GM12878 (cell line): ENCODE measurements at regions of chr18 and their contacts with region 1.

Region 1: DNA sequence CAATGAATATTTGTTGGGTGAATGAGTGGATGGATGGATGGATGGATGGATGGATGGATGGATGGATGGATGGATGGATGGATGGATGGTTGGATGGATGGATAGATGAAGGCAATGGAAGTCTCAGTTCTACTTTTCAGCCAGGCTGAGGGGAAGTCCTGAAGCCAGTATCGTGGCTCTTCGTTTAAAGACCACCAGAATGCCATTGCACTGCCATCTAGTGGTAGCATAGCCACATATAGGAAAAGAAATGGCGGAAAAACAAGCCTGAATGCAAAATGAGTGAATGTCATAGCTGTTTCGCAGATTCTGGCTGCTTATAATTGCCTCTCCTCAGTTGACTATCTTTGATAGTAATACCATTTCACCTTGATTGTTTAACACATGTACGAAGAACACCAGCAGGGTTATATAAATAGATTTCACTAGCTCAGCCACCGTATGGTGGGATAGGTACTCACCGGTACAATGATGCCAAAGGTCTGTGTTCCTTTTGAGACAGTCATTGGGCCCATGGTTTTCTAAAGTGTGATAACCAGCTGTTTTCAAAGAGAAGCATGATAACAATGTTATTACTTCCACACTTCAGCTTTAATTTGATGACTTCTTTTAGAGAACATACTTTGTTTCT is 62.3 kb upstream of the GREB1L start:
- DNase-seq: peak; percentile 32
- ATAC-seq: peak; percentile 94
- H3K4me3 ChIP-seq: no peak overlapping the region
- H3K27ac ChIP-seq: no peak overlapping the region
- H3K4me1 ChIP-seq: no peaks in the 10 kb centered on the region
- H3K27me3 ChIP-seq: no peaks in the 10 kb centered on the region
- CTCF ChIP-seq: peak; percentile 78 to 85 (median 78)
- EP300 ChIP-seq: no peak
- POLR2A ChIP-seq: no peak
- RAD21 ChIP-seq: peak; percentile 83

Region 2: DNA sequence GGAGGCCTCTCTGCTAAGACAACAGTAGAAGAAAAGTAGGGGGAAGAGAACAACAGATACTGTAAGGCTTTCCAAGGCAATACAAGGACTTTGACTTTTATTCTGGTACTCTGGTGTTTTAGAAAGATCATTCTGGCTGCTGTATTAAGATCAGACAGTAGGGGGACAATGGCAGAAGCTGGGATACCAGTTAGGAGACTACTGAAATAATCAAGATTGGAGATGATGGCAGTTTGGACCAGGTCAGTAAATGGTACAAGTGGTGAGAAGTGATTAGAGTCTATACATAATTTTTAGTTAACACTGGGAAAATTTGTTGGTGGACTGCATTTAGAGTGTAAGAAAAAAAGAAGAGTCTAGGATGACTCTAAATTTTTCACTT is 207.8 kb before region 1 on chr18:
- CTCF ChIA-PET with region 1: interaction called, 8 read pairs
- POLR2A ChIA-PET with region 1: no interaction called
- RAD21 ChIA-PET with region 1: interaction called, 3 read pairs
- SMC1A ChIA-PET with region 1: interaction called, 5 read pairs
- in situ Hi-C with region 1: loop called (anchors 5 kb)
- intact Hi-C with region 1: loop called (anchors 2 kb)
- DNase-seq: no peak
- ATAC-seq: peak; percentile 85
- H3K4me3 ChIP-seq: no peak overlapping the region
- H3K27ac ChIP-seq: no peak overlapping the region
- H3K4me1 ChIP-seq: no peaks in the 10 kb centered on the region
- H3K27me3 ChIP-seq: no peaks in the 10 kb centered on the region
- CTCF ChIP-seq: peak; percentile 26 to 50 (median 49); a peak in 4 of 6 replicates
- EP300 ChIP-seq: no peak
- POLR2A ChIP-seq: no peak
- RAD21 ChIP-seq: peak; percentile 37; the same call in 1 of the 2 replicates

Region 3: GRCh38 chr18:21053127-21053526 is 126.6 kb before region 1 on chr18:
- CTCF ChIA-PET with region 1: interaction called, 4 read pairs
- POLR2A ChIA-PET with region 1: no interaction called
- RAD21 ChIA-PET with region 1: interaction called, 4 read pairs
- SMC1A ChIA-PET with region 1: no interaction called
- in situ Hi-C with region 1: no loop called
- intact Hi-C with region 1: loop called (anchors 10 kb)
- DNase-seq: no peak
- ATAC-seq: no peak
- H3K4me3 ChIP-seq: no peak overlapping the region
- H3K27ac ChIP-seq: no peak overlapping the region
- H3K4me1 ChIP-seq: no peaks in the 10 kb centered on the region; the same call in 1 of the 2 replicates
- H3K27me3 ChIP-seq: no peaks in the 10 kb centered on the region
- CTCF ChIP-seq: no peak
- EP300 ChIP-seq: no peak
- POLR2A ChIP-seq: no peak
- RAD21 ChIP-seq: no peak

Region 4: GRCh38 chr18:21111341-21112139 is 68.2 kb before region 1 on chr18 and contains the start of gene ROCK1:
- CTCF ChIA-PET with region 1: no interaction called
- POLR2A ChIA-PET with region 1: no interaction called
- RAD21 ChIA-PET with region 1: no interaction called
- SMC1A ChIA-PET with region 1: interaction called, 3 read pairs
- in situ Hi-C with region 1: no loop called
- intact Hi-C with region 1: loop called (anchors 10 kb)
- DNase-seq: peak; percentile 65
- ATAC-seq: peak; percentile 91
- H3K4me3 ChIP-seq: peak within 1 kb of the TSS; percentile 92
- H3K27ac ChIP-seq: peak within 1 kb of the TSS; percentile 96
- H3K4me1 ChIP-seq: no peaks in the 10 kb centered on the region
- H3K27me3 ChIP-seq: no peaks in the 10 kb centered on the region
- CTCF ChIP-seq: no peak
- EP300 ChIP-seq: no peak
- POLR2A ChIP-seq: peak; percentile 73; the same call in 1 of the 2 replicates
- RAD21 ChIP-seq: no peak
- polyA plus RNA-seq, gene ROCK1: 14.8 to 15.1 TPM

Region 5: GRCh38 chr18:21163647-21164547 is 15.8 kb before region 1 on chr18:
- CTCF ChIA-PET with region 1: interaction called, 11 read pairs
- POLR2A ChIA-PET with region 1: no interaction called
- RAD21 ChIA-PET with region 1: no interaction called
- SMC1A ChIA-PET with region 1: no interaction called
- in situ Hi-C with region 1: no loop called
- intact Hi-C with region 1: no loop called
- DNase-seq: no peak
- ATAC-seq: no peak
- H3K4me3 ChIP-seq: no peak overlapping the region
- H3K27ac ChIP-seq: no peak overlapping the region
- H3K4me1 ChIP-seq: no peaks in the 10 kb centered on the region
- H3K27me3 ChIP-seq: no peaks in the 10 kb centered on the region
- CTCF ChIP-seq: no peak
- EP300 ChIP-seq: no peak
- POLR2A ChIP-seq: no peak
- RAD21 ChIP-seq: no peak